Right cardiac atrium (tissue), 5 donors: ENCODE measurements at regions of chr2 and their contacts with region 1.

Region 1: DNA sequence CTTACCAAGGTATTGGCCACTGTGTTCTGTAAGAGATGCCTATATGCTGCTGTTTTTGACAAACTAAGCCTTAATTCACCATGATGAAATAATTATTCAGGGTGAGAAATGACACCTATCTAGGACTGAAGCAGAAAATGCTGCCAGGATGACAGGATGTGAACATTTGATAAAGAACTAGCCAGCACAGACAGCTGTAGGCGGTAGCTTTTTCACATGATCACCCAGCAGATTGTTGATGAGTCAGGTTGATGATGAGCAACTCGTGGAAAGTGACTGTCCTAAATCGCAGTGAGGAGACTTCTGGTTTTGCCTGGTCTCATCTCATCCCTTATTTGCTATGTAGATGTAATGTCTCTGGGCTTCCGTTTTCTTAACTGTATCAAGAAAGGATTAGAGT is 144.1 kb downstream of the PRPF40A start:
- DNase-seq: no peak
- ATAC-seq: peak in 1 of 2 donors; percentile 21
- H3K4me3 ChIP-seq: no peak overlapping the region
- H3K27ac ChIP-seq: no peak overlapping the region
- H3K4me1 ChIP-seq: peaks cover 6% of the 10 kb centered on the region
- H3K27me3 ChIP-seq: no peaks in the 10 kb centered on the region

Region 2: DNA sequence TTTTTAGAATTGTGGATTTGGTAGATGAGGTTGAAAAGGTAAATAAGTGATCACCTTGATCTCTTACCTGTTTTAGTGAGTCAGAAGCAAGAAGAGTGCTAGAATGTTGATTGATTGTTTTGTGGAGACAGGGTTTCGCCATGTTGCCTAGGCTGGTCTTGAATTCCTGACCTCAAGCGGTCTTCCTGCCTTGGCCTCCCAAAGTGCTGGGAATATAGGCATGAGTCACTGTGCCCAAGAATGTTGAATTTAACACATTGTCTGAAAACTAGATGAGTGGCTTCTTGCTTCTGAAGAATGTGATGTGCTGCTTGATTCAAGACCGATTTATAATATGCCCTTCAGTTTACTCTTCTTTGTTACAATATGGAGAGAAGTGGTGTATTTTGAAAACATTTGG is 116.9 kb before region 1 on chr2:
- intact Hi-C with region 1: no loop called
- DNase-seq: no peak
- ATAC-seq: no peak
- H3K4me3 ChIP-seq: no peak overlapping the region
- H3K27ac ChIP-seq: no peak overlapping the region
- H3K4me1 ChIP-seq: no peaks in the 10 kb centered on the region
- H3K27me3 ChIP-seq: no peaks in the 10 kb centered on the region

Region 3: DNA sequence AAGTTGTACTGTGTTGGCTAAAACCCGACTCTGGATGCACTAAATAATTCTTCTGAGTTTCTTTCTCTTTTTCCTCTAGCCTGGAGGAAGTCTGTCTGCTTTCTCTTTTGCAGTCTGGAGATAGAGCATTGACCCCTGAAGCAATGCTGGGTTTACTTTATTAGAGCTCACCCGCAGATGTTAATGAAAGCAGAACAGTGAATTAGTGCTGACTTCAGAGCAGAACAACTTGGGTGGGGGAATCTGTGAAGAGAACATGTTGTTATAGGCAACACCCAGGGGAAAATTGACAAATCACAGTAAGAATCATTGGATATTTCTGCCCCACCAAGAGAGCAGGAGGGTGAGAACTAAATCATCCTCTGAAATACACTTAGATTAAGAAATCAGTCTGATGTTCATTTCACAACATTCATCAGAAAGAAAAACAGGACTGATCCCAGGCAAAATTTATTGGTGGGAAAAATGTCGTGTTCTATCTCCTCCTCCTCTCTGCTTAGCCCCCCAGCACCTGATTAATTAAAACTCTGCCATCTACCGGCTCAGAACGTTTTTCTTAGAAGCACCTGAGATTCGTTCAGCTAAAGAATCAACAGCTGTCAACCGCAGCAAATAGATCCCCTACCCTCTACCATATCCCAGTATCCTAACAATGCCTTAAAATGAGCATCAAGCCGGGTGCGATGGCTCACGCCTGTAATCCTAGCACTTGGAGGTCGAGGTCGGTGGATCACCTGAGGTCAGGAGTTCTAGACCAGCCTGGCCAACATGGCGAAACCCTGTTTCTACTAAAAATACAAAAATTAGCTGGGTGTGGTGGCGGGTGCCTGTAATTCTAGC is 73.1 kb before region 1 on chr2:
- intact Hi-C with region 1: loop called in 1 of 4 experiments (anchors 10 kb)
- DNase-seq: peak in 1 of 3 donors; percentile 40
- ATAC-seq: peak; percentile 92 to 93
- H3K4me3 ChIP-seq: no peak overlapping the region
- H3K27ac ChIP-seq: peak overlapping the region; percentile 43
- H3K4me1 ChIP-seq: peaks cover 10% of the 10 kb centered on the region
- H3K27me3 ChIP-seq: no peaks in the 10 kb centered on the region